Esophagus muscularis mucosa (tissue), 4 donors: ENCODE measurements at regions of chr11 and their contacts with region 1.

Region 1: DNA sequence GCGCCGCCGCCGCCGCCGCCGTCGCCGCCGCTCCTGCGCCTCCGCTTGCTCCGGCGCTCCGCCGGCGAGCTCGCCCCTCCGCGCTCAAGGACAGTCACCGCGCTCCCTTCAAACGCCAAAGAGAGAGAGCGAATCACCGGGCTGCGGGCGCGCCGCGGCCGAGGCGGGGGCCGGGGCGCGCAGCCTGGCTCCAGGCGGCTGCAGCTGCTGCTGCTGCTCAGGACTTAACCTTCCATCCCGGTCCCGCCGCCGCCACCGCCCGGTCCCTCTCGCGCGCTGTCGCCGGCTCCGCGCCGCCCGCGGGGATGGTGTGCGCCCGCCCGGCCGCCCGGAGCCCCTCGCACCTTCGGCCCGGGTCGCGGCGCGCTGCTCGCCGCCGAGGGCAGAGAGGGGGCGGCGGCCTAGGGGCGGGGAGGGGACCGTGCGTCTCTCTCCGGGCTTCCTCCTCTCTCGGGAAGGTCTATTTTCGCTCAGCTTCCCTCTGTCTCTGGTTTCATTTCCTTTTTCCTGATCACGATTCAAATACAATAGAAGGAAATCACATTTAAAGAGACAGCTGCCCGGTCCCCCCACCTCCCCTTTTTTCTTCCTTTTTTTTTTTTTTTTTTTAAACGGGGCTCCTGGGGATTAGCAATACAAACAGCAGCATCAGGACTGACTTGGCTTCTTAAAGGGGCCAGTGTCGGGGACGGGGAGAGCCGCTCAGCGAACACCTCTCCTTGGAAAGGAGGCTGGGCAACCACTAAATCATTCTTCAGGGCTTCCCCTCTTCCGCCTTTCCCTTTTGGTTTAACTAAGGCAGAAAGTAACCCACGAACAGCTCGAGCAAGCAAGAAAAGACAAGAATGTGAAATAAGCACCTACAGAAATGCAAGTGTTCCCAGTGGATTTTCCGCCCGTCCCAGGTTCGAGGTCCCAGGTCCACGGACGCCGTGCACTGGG is 22.1 kb downstream of the LMO2 start:
- DNase-seq: no peak
- H3K4me3 ChIP-seq: peak overlapping the region; percentile 61 to 73 (median 64)
- H3K27ac ChIP-seq: peak overlapping the region; percentile 75 to 81 (median 79)
- H3K4me1 ChIP-seq: peaks cover 22 to 29% (median 24%) of the 10 kb centered on the region in 4 donors
- H3K27me3 ChIP-seq: peaks cover 0 to 64% (median 9%) of the 10 kb centered on the region in 4 donors
- CTCF ChIP-seq: no peak
- EP300 ChIP-seq: no peak
- POLR2A ChIP-seq: no peak

Region 2: GRCh38 chr11:33808228-33808828 is 61.4 kb before region 1 on chr11:
- intact Hi-C with region 1: no loop called
- DNase-seq: no peak
- H3K4me3 ChIP-seq: no peak overlapping the region
- H3K27ac ChIP-seq: no peak overlapping the region
- H3K4me1 ChIP-seq: no peaks in the 10 kb centered on the region
- H3K27me3 ChIP-seq: peaks cover 0 to 6% (median 0%) of the 10 kb centered on the region in 4 donors
- CTCF ChIP-seq: peak; percentile 87 to 94 (median 90)
- EP300 ChIP-seq: no peak
- POLR2A ChIP-seq: no peak

Region 3: DNA sequence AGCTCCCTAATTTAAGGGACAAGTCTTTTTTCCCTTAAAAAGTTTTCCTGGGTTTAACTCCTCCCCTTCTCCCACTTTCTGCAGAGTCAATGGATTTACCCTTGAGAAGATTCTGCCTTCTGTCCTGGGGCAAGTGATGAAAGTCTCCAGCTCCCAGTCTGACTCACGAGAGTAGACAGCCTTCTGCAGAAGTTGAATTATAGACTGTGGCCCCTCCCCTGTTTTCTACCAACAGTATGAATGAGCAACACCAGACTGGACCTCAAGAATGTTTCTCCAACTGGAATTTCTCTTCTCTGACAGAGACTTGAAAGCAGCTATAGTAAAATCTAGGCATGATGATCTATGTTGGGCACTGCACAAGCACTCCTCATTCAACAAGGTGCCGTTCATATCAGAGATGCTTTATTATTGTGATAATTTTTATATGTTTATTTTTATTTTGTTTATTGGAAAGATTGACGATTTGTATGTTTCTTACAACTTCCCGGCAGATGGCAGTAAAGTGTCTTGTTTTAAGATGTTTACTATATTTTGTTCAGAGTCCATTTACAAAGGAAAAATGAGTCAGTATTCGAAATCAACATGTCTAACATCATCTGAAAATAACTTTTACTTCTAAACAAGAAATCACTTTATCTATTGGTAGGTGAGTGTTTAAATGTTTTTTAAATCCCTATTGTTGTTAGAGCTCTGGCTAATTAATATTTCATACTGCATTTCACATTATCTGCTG is 34.4 kb before region 1 on chr11:
- intact Hi-C with region 1: no loop called
- DNase-seq: no peak
- H3K4me3 ChIP-seq: no peak overlapping the region
- H3K27ac ChIP-seq: no peak overlapping the region
- H3K4me1 ChIP-seq: no peaks in the 10 kb centered on the region
- H3K27me3 ChIP-seq: peaks cover 0 to 47% (median 2%) of the 10 kb centered on the region in 4 donors
- CTCF ChIP-seq: peak in 1 of 3 experiments; percentile 13
- EP300 ChIP-seq: no peak
- POLR2A ChIP-seq: no peak

Region 4: GRCh38 chr11:33936725-33937604 is 67.2 kb after region 1 on chr11:
- intact Hi-C with region 1: loop called (anchors 5 kb)
- DNase-seq: no peak
- H3K4me3 ChIP-seq: no peak overlapping the region
- H3K27ac ChIP-seq: peak overlapping the region; percentile 31 to 54 (median 38)
- H3K4me1 ChIP-seq: peaks cover 12 to 32% (median 27%) of the 10 kb centered on the region in 4 donors
- H3K27me3 ChIP-seq: no peaks in the 10 kb centered on the region
- CTCF ChIP-seq: no peak
- EP300 ChIP-seq: no peak
- POLR2A ChIP-seq: no peak